ENCODE measurements at regions of chr3 and their contacts with region 1.

Region 1: GRCh38 chr3:126342991-126343648 is 14.1 kb downstream of the KLF15 start:
- DNase-seq: peak in 1 of 2 donors; percentile 2
- ATAC-seq: no peak
- H3K4me3 ChIP-seq: no peak overlapping the region
- H3K27ac ChIP-seq: no peak overlapping the region
- H3K4me1 ChIP-seq: peaks cover 0 to 61% (median 28%) of the 10 kb centered on the region in 9 donors
- H3K27me3 ChIP-seq: no peaks in the 10 kb centered on the region
- CTCF ChIP-seq: no peak

Region 2: DNA sequence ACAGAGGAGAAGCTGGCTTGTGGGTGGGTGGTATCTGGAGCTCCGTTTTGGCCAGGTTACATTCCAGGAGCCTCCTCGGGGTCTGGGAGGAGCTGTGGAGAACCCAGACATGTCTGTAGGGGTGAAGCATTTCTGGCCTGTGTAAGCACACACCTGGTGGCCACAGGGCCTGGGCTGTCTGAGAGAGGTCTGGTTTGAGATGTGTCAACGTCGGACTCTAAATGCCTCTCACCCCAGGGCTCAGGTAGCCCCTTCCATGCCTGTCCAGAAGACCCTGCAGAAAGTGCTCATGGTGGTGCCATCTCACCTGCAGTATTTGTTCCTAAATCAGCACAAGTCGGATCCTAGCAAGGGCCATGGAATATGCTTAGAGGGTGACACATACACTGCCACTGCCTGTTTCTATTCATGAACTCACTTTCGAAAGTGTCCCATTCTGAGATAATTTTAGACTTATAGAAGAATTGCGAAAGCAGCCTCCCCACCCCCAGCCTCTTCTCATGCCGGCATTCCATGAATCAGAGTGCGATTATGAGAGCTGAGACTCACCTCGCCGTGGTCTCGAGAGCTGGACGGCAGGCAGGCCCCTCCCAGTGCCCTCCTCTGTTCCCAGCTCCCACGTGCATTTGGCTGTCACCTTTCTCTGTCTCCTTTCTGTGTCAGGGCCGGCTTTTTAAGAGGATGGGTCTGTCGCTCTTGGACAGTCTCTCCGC is 49.6 kb before region 1 on chr3:
- intact Hi-C with region 1: loop called in 2 of 10 experiments (anchors 5 kb)
- DNase-seq: peak; percentile 15 to 36
- ATAC-seq: peak; percentile 42 to 97 (median 76)
- H3K4me3 ChIP-seq: no peak overlapping the region
- H3K27ac ChIP-seq: peak overlapping the region in 9 of 10 donors; percentile 12 to 75 (median 53)
- H3K4me1 ChIP-seq: peaks cover 0 to 8% (median 1%) of the 10 kb centered on the region in 9 donors
- H3K27me3 ChIP-seq: peaks cover 0 to 12% (median 0%) of the 10 kb centered on the region in 7 donors
- CTCF ChIP-seq: no peak

Measured in heart right ventricle (tissue), 16 donors.